ENCODE measurements at regions of chr2 and their contacts with region 1.

Region 1: GRCh38 chr2:68121873-68122679 is 35.6 kb upstream of the PNO1 start:
- DNase-seq: peak; percentile 70 to 89
- ATAC-seq: peak; percentile 80 to 85
- H3K4me3 ChIP-seq: no peak overlapping the region
- H3K27ac ChIP-seq: no peak overlapping the region
- H3K4me1 ChIP-seq: no peaks in the 10 kb centered on the region
- CTCF ChIP-seq: peak; percentile 98
- EP300 ChIP-seq: no peak
- POLR2A ChIP-seq: no peak
- RAD21 ChIP-seq: peak; percentile 93

Region 2: GRCh38 chr2:67674668-67675067 is 447.4 kb before region 1 on chr2:
- CTCF ChIA-PET with region 1: no interaction called
- POLR2A ChIA-PET with region 1: no interaction called
- DNase-seq: no peak
- ATAC-seq: no peak
- H3K4me3 ChIP-seq: no peak overlapping the region
- H3K27ac ChIP-seq: no peak overlapping the region
- H3K4me1 ChIP-seq: no peaks in the 10 kb centered on the region
- CTCF ChIP-seq: no peak
- EP300 ChIP-seq: no peak
- POLR2A ChIP-seq: no peak
- RAD21 ChIP-seq: no peak

Region 3: GRCh38 chr2:68134554-68134953 is 12.5 kb after region 1 on chr2:
- CTCF ChIA-PET with region 1: interaction called, 65 read pairs
- POLR2A ChIA-PET with region 1: no interaction called
- DNase-seq: no peak
- ATAC-seq: no peak
- H3K4me3 ChIP-seq: no peak overlapping the region
- H3K27ac ChIP-seq: no peak overlapping the region
- H3K4me1 ChIP-seq: no peaks in the 10 kb centered on the region
- CTCF ChIP-seq: no peak
- EP300 ChIP-seq: no peak
- POLR2A ChIP-seq: no peak
- RAD21 ChIP-seq: no peak

Region 4: DNA sequence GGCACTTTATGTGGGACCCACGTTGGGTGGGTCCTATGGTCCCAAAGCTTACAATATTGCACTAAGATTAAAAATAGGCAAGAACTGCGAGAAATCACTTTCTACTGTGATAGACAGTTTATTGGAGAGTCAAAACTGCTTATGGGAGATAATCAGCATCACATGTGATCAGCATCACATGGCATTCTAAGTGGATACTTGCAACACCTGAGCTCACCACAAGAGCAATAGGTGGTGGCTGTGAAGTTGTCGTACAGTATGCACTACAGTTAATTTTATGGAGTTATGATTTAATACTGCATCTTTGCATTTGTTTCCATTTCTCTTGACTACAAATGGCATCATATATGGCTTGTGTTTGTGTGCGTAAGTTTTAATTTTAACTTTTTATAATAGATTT is 47.2 kb after region 1 on chr2:
- CTCF ChIA-PET with region 1: interaction called, 10 read pairs
- POLR2A ChIA-PET with region 1: no interaction called
- DNase-seq: peak; percentile 22 to 50
- ATAC-seq: peak; percentile 53 to 67; a peak in 3 of 6 replicates
- H3K4me3 ChIP-seq: no peak overlapping the region
- H3K27ac ChIP-seq: no peak overlapping the region
- H3K4me1 ChIP-seq: no peaks in the 10 kb centered on the region
- CTCF ChIP-seq: no peak
- EP300 ChIP-seq: no peak
- POLR2A ChIP-seq: no peak
- RAD21 ChIP-seq: no peak

Region 5: DNA sequence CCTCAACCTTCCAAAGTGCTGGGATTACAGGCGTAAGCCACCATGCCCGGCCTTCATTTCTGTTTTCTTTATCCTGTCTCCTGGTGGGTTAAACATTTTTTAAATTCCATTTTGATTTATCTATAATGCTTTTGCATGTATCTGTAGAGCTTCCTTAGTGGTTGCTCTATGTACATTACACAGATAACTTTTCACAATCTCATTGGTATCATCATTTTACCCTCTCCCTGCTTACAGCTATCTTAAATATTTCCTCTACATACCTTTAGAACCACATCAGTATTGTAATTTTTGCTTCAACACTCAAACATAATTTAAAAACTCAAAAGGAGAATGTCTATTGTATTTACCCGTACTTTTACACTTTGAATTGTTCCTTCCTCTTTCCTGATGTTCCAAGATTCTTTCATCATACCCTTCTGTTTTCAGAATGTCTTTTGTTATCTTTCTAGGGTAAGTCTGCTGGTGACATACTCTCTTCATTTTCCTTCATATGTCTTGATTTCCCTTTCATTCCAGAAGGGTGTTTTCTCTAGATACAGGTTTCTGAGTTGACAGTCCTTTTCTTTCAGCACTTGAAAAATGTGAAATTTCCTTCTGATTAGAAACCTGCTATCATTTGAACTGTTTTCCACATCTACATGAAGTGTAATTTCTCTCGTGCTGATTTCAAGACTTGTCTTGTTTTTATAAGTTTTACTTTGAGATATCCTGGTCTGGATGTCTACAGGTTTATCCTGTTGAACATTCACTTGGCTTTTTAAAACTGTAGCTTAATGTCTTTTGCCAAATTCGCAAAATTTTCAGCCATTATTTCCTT is 108.4 kb after region 1 on chr2:
- CTCF ChIA-PET with region 1: interaction called, 12 read pairs
- POLR2A ChIA-PET with region 1: no interaction called
- DNase-seq: no peak
- ATAC-seq: no peak; a peak in 1 of 6 replicates
- H3K4me3 ChIP-seq: no peak overlapping the region
- H3K27ac ChIP-seq: no peak overlapping the region
- H3K4me1 ChIP-seq: peaks cover 21% of the 10 kb centered on the region; the same call in 2 of the 3 replicates
- CTCF ChIP-seq: no peak
- EP300 ChIP-seq: no peak
- POLR2A ChIP-seq: no peak
- RAD21 ChIP-seq: no peak

Region 6: GRCh38 chr2:68251187-68251854 is 129.2 kb after region 1 on chr2:
- CTCF ChIA-PET with region 1: interaction called, 52 read pairs
- POLR2A ChIA-PET with region 1: no interaction called
- DNase-seq: peak; percentile 79 to 86
- ATAC-seq: peak; percentile 60 to 79
- H3K4me3 ChIP-seq: peak overlapping the region; percentile 95
- H3K27ac ChIP-seq: peak overlapping the region; percentile 97 to 99
- H3K4me1 ChIP-seq: peaks cover 46% of the 10 kb centered on the region
- CTCF ChIP-seq: peak; percentile 57
- EP300 ChIP-seq: no peak
- POLR2A ChIP-seq: no peak
- RAD21 ChIP-seq: peak; percentile 44 to 46; a peak in 3 of 5 replicates

Region 7: DNA sequence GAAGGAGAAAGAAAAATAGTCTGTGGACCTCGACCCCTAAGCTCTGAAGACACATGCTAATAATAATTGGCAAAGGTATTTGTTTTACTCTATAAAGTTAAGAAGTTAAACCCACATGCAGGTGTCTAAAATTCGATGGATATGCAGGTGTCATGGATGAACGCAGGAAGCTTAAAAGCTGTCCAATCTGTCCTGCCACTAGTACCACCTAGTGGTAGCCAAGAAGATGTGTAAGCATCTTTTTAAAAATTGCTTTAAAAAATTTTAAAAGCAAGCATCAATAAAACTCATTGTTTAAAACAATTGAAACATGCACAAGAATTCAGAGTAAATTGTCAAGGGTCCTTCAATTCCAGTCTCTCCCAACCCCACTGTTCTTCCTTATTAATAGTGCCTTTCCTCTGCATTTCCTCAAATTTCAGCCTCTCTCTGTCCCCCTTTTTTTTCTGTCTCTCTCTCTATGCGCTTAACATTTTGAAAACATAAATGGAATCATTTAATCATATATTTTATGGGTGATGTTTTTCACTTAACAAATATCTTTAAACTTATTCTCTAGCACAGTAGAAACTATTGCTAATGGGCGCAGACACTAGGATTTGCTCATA is 160.8 kb after region 1 on chr2:
- CTCF ChIA-PET with region 1: interaction called, 108 read pairs
- POLR2A ChIA-PET with region 1: no interaction called
- DNase-seq: peak; percentile 69 to 70
- ATAC-seq: peak; percentile 84 to 88
- H3K4me3 ChIP-seq: no peak overlapping the region
- H3K27ac ChIP-seq: no peak overlapping the region
- H3K4me1 ChIP-seq: 0 out of 3 replicates have a peak, but pooled peaks cover 3% of the 10 kb centered on the region
- CTCF ChIP-seq: peak; percentile 87
- EP300 ChIP-seq: no peak
- POLR2A ChIP-seq: no peak
- RAD21 ChIP-seq: peak; percentile 76 to 80